Endothelial cell of umbilical vein (primary cell): ENCODE measurements at regions of chr2 and their contacts with region 1.

Region 1: GRCh38 chr2:163735685-163736432 is at the start of gene FIGN:
- DNase-seq: peak; percentile 91
- H3K4me3 ChIP-seq: peak within 1 kb of the TSS; percentile 66 to 96 (median 94)
- H3K27ac ChIP-seq: peak within 1 kb of the TSS; percentile 72
- H3K4me1 ChIP-seq: peaks cover 11% of the 10 kb centered on the region
- H3K27me3 ChIP-seq: no peaks in the 10 kb centered on the region
- CTCF ChIP-seq: no peak
- POLR2A ChIP-seq: peak; percentile 60
- total RNA-seq, gene FIGN: 6.6 and 8.1 TPM in 2 replicates

Region 2: GRCh38 chr2:163471947-163472346 is 263.9 kb before region 1 on chr2:
- CTCF ChIA-PET with region 1: no interaction called
- POLR2A ChIA-PET with region 1: no interaction called
- dilution Hi-C with region 1: no loop called
- intact Hi-C with region 1: loop called (anchors 5 kb)
- DNase-seq: peak; percentile 18
- H3K4me3 ChIP-seq: no peak overlapping the region
- H3K27ac ChIP-seq: no peak overlapping the region
- H3K4me1 ChIP-seq: no peaks in the 10 kb centered on the region
- H3K27me3 ChIP-seq: peaks cover 2 to 3% of the 10 kb centered on the region in 2 experiments
- CTCF ChIP-seq: peak in 1 of 2 donors; percentile 22
- POLR2A ChIP-seq: no peak

Region 3: GRCh38 chr2:163551616-163552373 is 184.1 kb before region 1 on chr2:
- CTCF ChIA-PET with region 1: no interaction called
- POLR2A ChIA-PET with region 1: no interaction called
- dilution Hi-C with region 1: no loop called
- intact Hi-C with region 1: loop called (anchors 5 kb)
- DNase-seq: no peak
- H3K4me3 ChIP-seq: no peak overlapping the region
- H3K27ac ChIP-seq: no peak overlapping the region
- H3K4me1 ChIP-seq: no peaks in the 10 kb centered on the region
- H3K27me3 ChIP-seq: no peaks in the 10 kb centered on the region
- CTCF ChIP-seq: no peak
- POLR2A ChIP-seq: no peak

Region 4: DNA sequence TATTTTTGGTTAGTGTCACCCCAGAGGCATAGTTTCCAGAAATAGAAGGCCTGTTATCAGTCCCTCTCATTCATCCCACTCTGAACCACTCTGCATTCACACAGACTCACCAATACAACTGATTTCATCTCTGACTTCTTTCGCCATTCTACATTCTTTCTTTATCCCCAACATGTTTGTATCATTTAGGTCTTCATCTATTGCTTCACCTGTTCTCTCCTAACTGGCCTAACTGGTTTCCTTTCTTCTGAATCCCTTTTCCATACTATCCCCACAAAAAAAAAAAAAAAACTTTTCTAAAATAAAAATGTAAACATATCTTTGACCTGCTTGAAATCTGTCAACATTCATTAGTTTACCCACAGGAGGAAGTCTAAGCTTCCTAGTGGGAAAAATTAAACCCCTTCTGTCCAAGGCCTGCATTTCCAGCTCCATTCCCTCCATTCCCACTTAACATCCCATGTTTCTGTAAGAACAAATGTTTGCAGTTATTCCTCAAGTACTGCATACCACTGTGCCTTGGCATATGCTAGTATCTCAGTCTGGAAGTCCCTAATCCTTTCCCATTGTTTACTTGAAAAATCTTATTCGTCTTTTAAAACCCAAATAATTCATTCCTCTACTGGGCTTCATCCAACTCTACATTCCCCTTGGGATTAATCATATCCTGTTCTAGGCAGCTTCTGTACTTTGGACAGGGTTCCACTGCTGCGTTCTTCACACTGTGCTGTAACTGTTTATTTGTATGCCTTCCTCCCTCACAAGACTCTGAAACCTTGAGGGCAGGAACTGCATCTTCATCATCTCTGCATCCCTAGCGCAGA is 68.6 kb before region 1 on chr2:
- CTCF ChIA-PET with region 1: no interaction called
- POLR2A ChIA-PET with region 1: no interaction called
- dilution Hi-C with region 1: no loop called
- intact Hi-C with region 1: loop called (anchors 5 kb)
- DNase-seq: peak; percentile 96
- H3K4me3 ChIP-seq: no peak overlapping the region
- H3K27ac ChIP-seq: peak overlapping the region; percentile 9
- H3K4me1 ChIP-seq: peaks cover 28% of the 10 kb centered on the region
- H3K27me3 ChIP-seq: no peaks in the 10 kb centered on the region
- CTCF ChIP-seq: no peak
- POLR2A ChIP-seq: no peak

Region 5: DNA sequence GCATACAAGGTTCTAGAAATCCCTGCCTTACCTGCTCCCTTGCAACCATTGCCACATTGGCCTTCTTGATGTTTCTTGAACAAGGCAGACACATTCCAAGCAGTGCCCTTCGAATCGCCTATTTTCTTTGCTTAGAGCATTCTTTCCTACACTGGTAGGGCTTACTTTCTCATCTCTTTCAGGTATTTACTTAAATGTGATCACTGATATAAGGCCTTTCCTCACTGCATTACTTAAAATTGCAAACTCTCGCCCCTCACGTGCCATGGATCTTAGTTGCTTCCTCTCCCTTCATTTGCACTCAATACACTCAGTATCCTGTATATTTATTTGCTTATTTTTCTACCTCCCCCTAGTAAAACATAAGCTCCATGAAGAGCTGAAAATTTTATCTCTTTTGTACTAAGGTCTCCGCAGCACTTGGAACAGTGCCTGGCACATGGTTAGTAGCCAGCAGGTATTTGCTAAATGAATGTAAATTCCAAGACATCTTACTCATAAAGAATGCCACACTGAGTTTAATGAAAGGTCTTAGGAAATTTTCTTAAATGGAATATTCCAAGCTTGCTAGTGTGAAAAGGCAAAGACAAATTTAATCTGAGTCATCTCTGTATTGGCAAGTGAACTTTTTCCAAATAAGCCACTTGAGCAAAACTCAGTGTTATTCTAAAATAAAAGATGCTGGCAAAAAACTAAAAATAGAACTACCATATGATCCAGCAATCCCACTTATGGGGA is 42.4 kb after region 1 on chr2:
- CTCF ChIA-PET with region 1: no interaction called
- POLR2A ChIA-PET with region 1: no interaction called
- dilution Hi-C with region 1: no loop called
- intact Hi-C with region 1: loop called (anchors 2 kb)
- DNase-seq: peak; percentile 68
- H3K4me3 ChIP-seq: no peak overlapping the region
- H3K27ac ChIP-seq: peak overlapping the region; percentile 61
- H3K4me1 ChIP-seq: peaks cover 29% of the 10 kb centered on the region
- H3K27me3 ChIP-seq: no peaks in the 10 kb centered on the region
- CTCF ChIP-seq: no peak
- POLR2A ChIP-seq: no peak

Region 6: GRCh38 chr2:163878531-163879117 is 142.8 kb after region 1 on chr2:
- CTCF ChIA-PET with region 1: interaction called, 6 read pairs
- POLR2A ChIA-PET with region 1: no interaction called
- dilution Hi-C with region 1: no loop called
- intact Hi-C with region 1: loop called (anchors 5 kb)
- DNase-seq: peak; percentile 28
- H3K4me3 ChIP-seq: no peak overlapping the region
- H3K27ac ChIP-seq: no peak overlapping the region
- H3K4me1 ChIP-seq: no peaks in the 10 kb centered on the region
- H3K27me3 ChIP-seq: no peaks in the 10 kb centered on the region
- CTCF ChIP-seq: peak; percentile 52 to 61
- POLR2A ChIP-seq: no peak